ENCODE measurements at regions of chr12 and their contacts with region 1.

Region 1: GRCh38 chr12:56315622-56316473 is at the start of gene CNPY2:
- DNase-seq: peak; percentile 97 to 100
- ATAC-seq: peak; percentile 97
- H3K4me3 ChIP-seq: peak within 1 kb of the TSS; percentile 93
- H3K27ac ChIP-seq: peak within 1 kb of the TSS; percentile 94 to 96
- H3K4me1 ChIP-seq: peaks cover 11% of the 10 kb centered on the region
- CTCF ChIP-seq: no peak
- EP300 ChIP-seq: no peak
- POLR2A ChIP-seq: peak; percentile 88
- RAD21 ChIP-seq: peak; percentile 30 to 54; a peak in 2 of 5 replicates
- polyA plus RNA-seq, gene CNPY2: 218 and 257 TPM in 2 replicates

Region 2: GRCh38 chr12:56299853-56300643 is 15.8 kb before region 1 on chr12 and contains the start of gene CS:
- CTCF ChIA-PET with region 1: interaction called, 4 read pairs
- POLR2A ChIA-PET with region 1: interaction called, 11 read pairs
- DNase-seq: peak; percentile 94 to 98
- ATAC-seq: peak; percentile 94 to 97
- H3K4me3 ChIP-seq: peak within 1 kb of the TSS; percentile 69
- H3K27ac ChIP-seq: peak within 1 kb of the TSS; percentile 90 to 91
- H3K4me1 ChIP-seq: peaks cover 23% of the 10 kb centered on the region; the same call in 2 of the 3 replicates
- CTCF ChIP-seq: no peak
- EP300 ChIP-seq: no peak
- POLR2A ChIP-seq: peak; percentile 42
- RAD21 ChIP-seq: no peak
- polyA plus RNA-seq, gene CS: 223 and 263 TPM in 2 replicates

Region 3: DNA sequence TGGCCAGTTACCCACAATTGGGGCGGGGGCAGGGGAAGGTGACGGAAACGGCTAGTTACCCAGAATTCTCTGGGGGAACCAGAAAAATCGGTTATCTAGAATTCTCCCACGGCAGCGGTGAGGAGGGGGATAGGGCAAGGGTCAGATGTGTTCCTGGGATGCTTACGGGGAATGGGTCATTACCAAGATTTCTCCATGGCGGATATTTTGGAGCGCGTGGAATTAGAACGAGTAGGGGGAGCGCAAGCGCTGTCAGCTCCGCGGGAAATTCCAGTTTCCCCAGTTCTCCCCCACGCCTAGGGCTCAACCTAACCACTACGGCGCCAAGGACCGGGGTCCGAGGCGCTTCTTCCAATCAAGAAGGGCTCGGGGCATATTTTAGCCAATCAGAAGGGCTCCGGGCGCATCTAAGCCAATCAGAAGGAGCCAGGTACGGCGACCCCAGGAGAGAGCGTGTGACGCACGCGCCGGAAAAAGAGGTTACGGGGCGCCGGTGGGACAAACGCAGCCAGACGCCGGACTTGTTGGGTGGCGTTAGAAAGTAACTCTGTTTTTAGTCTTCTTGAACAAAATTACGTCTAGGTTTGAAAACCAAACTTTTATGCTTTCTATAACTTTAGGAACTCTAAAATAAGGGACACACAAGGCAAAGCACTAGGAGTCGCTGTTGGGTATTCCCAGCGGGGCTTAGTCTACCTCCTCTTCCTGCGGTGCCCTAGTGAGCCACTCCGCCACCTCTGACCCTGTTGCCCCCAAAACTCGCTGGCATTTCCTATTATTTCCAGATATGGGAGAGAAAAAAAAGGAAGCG is 18.0 kb after region 1 on chr12 and contains the start of gene PAN2:
- CTCF ChIA-PET with region 1: interaction called, 7 read pairs
- POLR2A ChIA-PET with region 1: interaction called, 17 read pairs
- DNase-seq: peak; percentile 99 to 100
- ATAC-seq: peak; percentile 97 to 100
- H3K4me3 ChIP-seq: peak within 1 kb of the TSS; percentile 54
- H3K27ac ChIP-seq: peak within 1 kb of the TSS; percentile 91 to 92
- H3K4me1 ChIP-seq: peaks cover 15% of the 10 kb centered on the region
- CTCF ChIP-seq: peak; percentile 47
- EP300 ChIP-seq: no peak
- POLR2A ChIP-seq: peak; percentile 61
- RAD21 ChIP-seq: peak; percentile 22 to 25; a peak in 2 of 5 replicates
- polyA plus RNA-seq, gene PAN2: 66.8 and 89.4 TPM in 2 replicates

Measured in A549 (cell line).